ENCODE measurements at regions of chr1 and their contacts with region 1.

Region 1: DNA sequence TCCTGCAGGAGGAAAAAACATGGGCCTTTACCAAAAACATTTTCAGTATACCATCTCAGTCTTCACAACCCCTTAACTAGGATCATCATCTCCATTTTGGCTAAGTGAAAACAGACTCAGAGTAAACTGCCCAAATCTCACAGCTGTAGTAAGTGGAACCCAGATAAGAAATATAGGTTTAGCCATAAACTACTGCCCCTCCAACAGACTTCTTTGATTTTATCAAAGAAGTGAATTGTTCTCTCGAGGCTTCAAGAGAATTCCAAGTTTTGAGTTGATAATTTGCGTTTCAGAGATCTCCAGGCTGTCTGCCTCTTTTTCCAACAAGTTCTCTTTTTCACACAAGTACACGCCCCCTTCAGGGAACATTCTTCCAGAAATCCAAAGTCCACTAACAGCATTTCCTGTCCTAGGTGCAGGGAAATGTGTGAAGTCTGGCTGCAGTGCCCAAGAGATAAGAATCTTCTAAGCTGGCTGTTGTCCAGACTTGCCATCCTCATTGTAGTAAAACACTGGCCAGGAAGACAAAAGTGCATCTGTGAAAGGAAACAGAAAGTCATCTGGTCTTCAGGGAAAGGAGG is 30.8 kb downstream of the RNF19B start:
- DNase-seq: peak; percentile 43
- H3K4me3 Mint-ChIP-seq: no peak overlapping the region
- H3K27ac Mint-ChIP-seq: peak overlapping the region; percentile 81
- H3K4me1 Mint-ChIP-seq: peaks cover 34% of the 10 kb centered on the region
- H3K27me3 Mint-ChIP-seq: no peaks in the 10 kb centered on the region
- CTCF ChIP-seq: no peak

Region 2: GRCh38 chr1:32992489-32993323 is 58.9 kb after region 1 on chr1:
- CTCF ChIA-PET with region 1: interaction called, 8 read pairs
- intact Hi-C with region 1: loop called (anchors 5 kb)
- DNase-seq: peak; percentile 90
- H3K4me3 Mint-ChIP-seq: no peak overlapping the region
- H3K27ac Mint-ChIP-seq: peak overlapping the region; percentile 74
- H3K4me1 Mint-ChIP-seq: peaks cover 44% of the 10 kb centered on the region
- H3K27me3 Mint-ChIP-seq: no peaks in the 10 kb centered on the region
- CTCF ChIP-seq: no peak

Region 3: DNA sequence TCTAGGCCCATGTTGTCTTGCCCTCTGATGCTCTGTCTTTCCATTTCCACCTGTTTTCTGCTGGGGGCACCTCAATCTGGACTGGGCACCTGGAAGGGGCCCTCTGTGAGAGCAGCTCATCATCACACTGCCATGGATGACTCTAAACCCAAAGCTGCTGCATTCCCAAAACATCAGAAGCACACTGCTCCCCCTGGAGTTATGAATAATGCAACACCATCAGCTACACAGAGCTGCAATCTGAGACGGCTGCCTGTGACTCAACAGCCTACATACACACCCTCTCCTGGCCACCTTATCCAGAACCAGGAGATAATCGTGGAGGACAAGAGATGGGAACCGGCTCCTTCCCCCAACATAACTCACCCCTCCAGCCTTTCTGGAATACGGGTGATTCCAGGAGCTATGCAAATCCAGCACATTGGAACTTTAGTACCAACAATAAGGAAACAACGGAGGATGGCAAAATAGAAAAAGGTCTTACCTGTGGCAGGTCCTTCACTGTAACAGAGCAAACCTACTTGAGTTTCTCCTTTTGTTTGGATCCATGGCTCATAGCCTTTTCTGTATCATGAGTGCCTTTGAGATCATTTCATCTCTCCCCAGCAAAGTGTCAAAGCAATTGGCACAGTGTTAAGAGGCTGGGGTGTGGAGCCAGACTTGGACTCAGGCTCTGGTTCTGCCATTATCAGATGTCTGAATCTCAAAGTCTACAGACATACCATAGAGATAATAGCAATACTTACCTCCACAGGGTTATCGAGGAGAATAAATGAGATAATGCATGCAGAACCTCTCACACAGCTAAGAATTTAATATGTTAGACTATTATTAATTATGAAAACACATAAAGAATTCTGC is 73.6 kb after region 1 on chr1:
- CTCF ChIA-PET with region 1: interaction called, 42 read pairs
- intact Hi-C with region 1: loop called (anchors 2 kb)
- DNase-seq: peak; percentile 67
- H3K4me3 Mint-ChIP-seq: no peak overlapping the region
- H3K27ac Mint-ChIP-seq: peak overlapping the region; percentile 18
- H3K4me1 Mint-ChIP-seq: peaks cover 57% of the 10 kb centered on the region
- H3K27me3 Mint-ChIP-seq: no peaks in the 10 kb centered on the region
- CTCF ChIP-seq: peak; percentile 71

Region 4: DNA sequence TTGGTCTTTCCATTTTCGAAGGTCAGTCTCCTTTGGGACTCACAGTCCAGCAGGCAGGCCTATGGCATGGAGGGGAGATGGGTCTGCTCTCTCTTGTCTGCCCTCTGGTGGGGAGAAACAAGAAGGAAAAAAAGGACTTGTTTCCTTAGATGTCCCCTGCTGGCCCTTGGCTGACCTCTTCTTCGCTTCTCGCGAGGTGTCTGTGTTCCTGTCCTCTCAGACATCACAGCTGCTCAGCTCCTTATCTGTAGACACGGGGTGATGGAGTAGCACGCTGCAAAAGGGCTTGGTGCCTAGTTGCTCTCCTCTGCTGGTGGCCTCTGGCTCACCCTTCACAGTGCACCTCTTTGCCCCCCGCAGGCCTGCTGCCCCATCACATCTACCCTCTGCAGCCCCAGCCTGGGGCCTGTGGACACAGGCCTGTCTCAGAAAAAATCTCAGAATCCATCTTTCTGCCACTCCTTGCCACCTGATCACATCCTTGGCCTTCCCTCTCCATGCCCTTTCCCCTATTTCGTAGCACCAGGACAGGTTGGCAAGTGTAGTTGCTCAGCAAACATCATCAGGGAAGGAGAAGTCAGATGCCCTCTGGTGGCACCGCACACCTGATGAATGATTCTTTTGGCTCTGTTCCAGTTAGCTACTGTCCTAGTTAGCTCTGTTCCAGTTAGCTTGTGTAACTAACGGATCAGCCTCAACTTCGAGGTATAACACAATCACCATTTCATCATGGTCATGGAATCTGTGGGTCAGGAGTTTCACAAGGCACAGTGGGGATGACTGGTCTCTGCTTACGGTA is 121.6 kb after region 1 on chr1:
- CTCF ChIA-PET with region 1: interaction called, 7 read pairs
- intact Hi-C with region 1: loop called (anchors 1 kb)
- DNase-seq: peak; percentile 75
- H3K4me3 Mint-ChIP-seq: no peak overlapping the region
- H3K27ac Mint-ChIP-seq: peak overlapping the region; percentile 15
- H3K4me1 Mint-ChIP-seq: peaks cover 14% of the 10 kb centered on the region
- H3K27me3 Mint-ChIP-seq: no peaks in the 10 kb centered on the region
- CTCF ChIP-seq: peak; percentile 74

Region 5: GRCh38 chr1:33086384-33086850 is 152.6 kb after region 1 on chr1:
- CTCF ChIA-PET with region 1: interaction called, 11 read pairs
- intact Hi-C with region 1: loop called (anchors 2 kb)
- DNase-seq: peak; percentile 73
- H3K4me3 Mint-ChIP-seq: no peak overlapping the region
- H3K27ac Mint-ChIP-seq: no peak overlapping the region
- H3K4me1 Mint-ChIP-seq: no peaks in the 10 kb centered on the region
- H3K27me3 Mint-ChIP-seq: peaks cover 18% of the 10 kb centered on the region
- CTCF ChIP-seq: peak; percentile 60